ENCODE measurements at regions of chr14 and their contacts with region 1.

Region 1: DNA sequence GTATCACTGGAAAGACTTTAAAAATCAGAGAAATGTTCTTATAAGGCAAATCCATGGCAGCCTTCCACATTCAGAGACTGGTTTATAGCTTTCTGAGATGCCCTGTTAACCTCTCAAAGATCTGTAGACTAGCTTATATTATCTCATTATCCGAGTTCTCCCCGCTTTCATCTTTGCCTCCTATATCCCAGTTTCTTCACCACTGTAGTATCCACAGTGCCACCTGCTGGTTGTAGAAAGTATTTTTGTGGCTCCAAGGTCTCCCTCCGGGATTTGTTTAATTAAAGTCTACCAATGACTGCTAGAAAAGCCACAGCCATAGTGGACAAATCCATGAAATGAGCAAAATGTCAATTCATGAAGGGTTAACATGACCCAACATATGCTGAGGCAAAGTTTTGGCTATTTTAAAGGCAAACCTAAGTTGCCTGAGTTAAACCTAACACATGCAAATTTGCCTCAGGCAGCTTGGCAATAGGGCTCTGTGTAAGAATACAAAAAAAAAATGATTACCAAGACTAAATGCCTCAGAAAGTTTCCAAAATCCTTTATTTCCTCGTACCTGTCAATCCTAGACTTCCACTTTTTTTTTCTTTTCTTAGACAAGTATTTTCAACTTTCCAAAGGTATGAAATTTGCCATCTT is 218.8 kb upstream of the BMP4 start:
- DNase-seq: peak; percentile 63
- ATAC-seq: no peak
- H3K4me3 ChIP-seq: no peak overlapping the region
- H3K4me3 Mint-ChIP-seq: no peak overlapping the region
- H3K27ac ChIP-seq: no peak overlapping the region
- H3K27ac Mint-ChIP-seq: no peak overlapping the region
- H3K4me1 ChIP-seq: no peaks in the 10 kb centered on the region
- H3K4me1 Mint-ChIP-seq: no peaks in the 10 kb centered on the region
- H3K27me3 ChIP-seq: peaks cover 0 to 5% (median 2%) of the 10 kb centered on the region in 4 experiments
- H3K27me3 Mint-ChIP-seq: peaks cover 19% of the 10 kb centered on the region
- CTCF ChIP-seq: peak; percentile 93

Region 2: DNA sequence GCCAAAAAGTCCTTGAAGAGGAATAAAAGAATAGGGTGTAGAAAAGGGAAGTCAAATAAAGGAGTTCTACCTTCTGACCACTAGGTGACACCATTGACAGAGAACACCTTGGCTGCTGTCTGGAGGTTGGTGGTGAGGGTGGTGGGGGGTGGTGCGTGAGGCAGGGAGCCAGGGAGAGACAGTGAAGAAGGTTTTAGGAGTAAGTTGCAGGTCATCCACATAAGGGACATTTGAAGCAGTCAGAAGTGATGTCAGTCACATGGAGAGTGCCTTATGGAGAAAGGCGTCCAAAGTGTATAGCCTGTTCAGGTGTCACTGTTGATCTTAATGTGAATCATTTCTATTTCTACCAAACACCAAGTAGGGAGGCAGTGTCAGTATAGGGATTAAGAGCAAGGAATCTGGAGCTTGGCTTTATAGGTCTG is 743.0 kb before region 1 on chr14:
- CTCF ChIA-PET with region 1: interaction called, 20 read pairs
- POLR2A ChIA-PET with region 1: no interaction called
- intact Hi-C with region 1: loop called (anchors 2 kb)
- DNase-seq: peak; percentile 17
- ATAC-seq: peak; percentile 36
- H3K4me3 ChIP-seq: no peak overlapping the region
- H3K4me3 Mint-ChIP-seq: no peak overlapping the region
- H3K27ac ChIP-seq: no peak overlapping the region
- H3K27ac Mint-ChIP-seq: no peak overlapping the region
- H3K4me1 ChIP-seq: no peaks in the 10 kb centered on the region
- H3K4me1 Mint-ChIP-seq: no peaks in the 10 kb centered on the region
- H3K27me3 ChIP-seq: no peaks in the 10 kb centered on the region
- H3K27me3 Mint-ChIP-seq: peaks cover 4% of the 10 kb centered on the region
- CTCF ChIP-seq: peak; percentile 60

Region 3: GRCh38 chr14:53532853-53533252 is 642.6 kb before region 1 on chr14:
- CTCF ChIA-PET with region 1: interaction called, 98 read pairs
- POLR2A ChIA-PET with region 1: no interaction called
- intact Hi-C with region 1: no loop called
- DNase-seq: no peak
- ATAC-seq: no peak
- H3K4me3 ChIP-seq: no peak overlapping the region
- H3K4me3 Mint-ChIP-seq: no peak overlapping the region
- H3K27ac ChIP-seq: no peak overlapping the region
- H3K27ac Mint-ChIP-seq: no peak overlapping the region
- H3K4me1 ChIP-seq: no peaks in the 10 kb centered on the region
- H3K4me1 Mint-ChIP-seq: no peaks in the 10 kb centered on the region
- H3K27me3 ChIP-seq: no peaks in the 10 kb centered on the region
- H3K27me3 Mint-ChIP-seq: no peaks in the 10 kb centered on the region
- CTCF ChIP-seq: no peak

Region 4: DNA sequence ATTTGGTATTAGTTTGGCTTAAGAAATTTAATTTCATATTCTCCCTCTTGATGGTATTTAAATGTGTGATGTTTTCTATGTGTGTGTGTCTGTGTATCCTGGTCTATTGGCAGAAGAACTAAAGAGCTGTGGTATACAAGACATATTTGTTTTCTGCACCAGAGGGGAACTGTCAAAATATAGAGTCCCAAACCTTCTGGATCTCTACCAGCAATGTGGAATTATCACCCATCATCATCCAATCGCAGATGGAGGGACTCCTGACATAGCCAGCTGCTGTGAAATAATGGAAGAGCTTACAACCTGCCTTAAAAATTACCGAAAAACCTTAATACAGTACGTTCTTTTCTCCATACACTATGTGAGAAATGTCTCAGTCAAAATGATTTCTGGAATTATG is 236.0 kb after region 1 on chr14:
- CTCF ChIA-PET with region 1: no interaction called
- POLR2A ChIA-PET with region 1: no interaction called
- intact Hi-C with region 1: no loop called
- DNase-seq: no peak
- ATAC-seq: no peak
- H3K4me3 ChIP-seq: no peak overlapping the region
- H3K4me3 Mint-ChIP-seq: no peak overlapping the region
- H3K27ac ChIP-seq: no peak overlapping the region
- H3K27ac Mint-ChIP-seq: no peak overlapping the region
- H3K4me1 ChIP-seq: no peaks in the 10 kb centered on the region
- H3K4me1 Mint-ChIP-seq: no peaks in the 10 kb centered on the region
- H3K27me3 ChIP-seq: no peaks in the 10 kb centered on the region
- H3K27me3 Mint-ChIP-seq: no peaks in the 10 kb centered on the region
- CTCF ChIP-seq: no peak

Region 5: DNA sequence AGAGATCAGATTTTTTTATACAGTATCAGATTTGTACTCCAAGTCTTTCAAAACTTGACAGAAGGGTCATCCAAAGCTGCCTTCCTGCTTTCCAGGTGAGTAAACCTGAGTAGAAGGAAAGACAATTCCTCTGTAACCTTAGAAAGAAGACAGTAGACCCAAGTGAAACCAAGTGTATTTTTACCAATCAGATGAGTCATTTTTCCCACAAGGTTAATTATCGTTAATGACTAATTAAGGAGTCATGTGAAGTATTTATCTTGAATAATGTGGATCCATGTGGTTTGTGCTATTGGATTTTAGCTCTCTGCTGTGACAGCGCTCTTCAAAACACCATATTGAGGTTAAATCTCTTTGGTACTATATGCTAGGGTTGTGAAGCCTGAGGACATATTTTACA is 1868.8 kb after region 1 on chr14:
- CTCF ChIA-PET with region 1: no interaction called
- POLR2A ChIA-PET with region 1: no interaction called
- intact Hi-C with region 1: no loop called
- DNase-seq: no peak
- ATAC-seq: no peak
- H3K4me3 ChIP-seq: no peak overlapping the region
- H3K4me3 Mint-ChIP-seq: no peak overlapping the region
- H3K27ac ChIP-seq: no peak overlapping the region
- H3K27ac Mint-ChIP-seq: no peak overlapping the region
- H3K4me1 ChIP-seq: no peaks in the 10 kb centered on the region
- H3K4me1 Mint-ChIP-seq: no peaks in the 10 kb centered on the region
- H3K27me3 ChIP-seq: peaks cover 0 to 7% (median 2%) of the 10 kb centered on the region in 4 experiments
- H3K27me3 Mint-ChIP-seq: peaks cover 4% of the 10 kb centered on the region
- CTCF ChIP-seq: no peak

Measured in B cell (primary cell).